ENCODE measurements at regions of chr18 and their contacts with region 1.

Region 1: DNA sequence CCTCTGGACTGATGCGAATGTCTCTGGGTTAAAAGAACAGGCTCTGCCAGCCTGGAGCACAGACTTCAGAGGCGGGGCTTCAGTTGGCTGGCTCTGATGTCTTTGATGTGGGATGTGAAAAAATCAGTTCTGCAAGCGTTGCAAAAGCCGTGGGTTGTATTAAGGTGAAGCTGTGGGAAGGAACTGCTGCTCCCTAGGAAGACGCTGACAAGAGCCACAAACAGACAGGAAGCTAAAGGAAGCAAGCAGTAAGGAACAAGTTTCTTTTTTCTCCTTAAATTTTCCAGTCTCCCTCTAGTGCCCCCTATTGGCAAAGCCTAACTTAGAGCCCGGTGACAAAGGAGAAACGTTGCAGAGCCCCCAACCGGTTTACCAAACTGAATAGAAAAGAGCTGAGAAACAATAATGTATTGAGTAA is 239.0 kb downstream of the CCDC178 start:
- DNase-seq: peak; percentile 70
- H3K4me3 ChIP-seq: no peak overlapping the region
- H3K27ac ChIP-seq: no peak overlapping the region
- H3K4me1 ChIP-seq: no peaks in the 10 kb centered on the region
- H3K27me3 ChIP-seq: no peaks in the 10 kb centered on the region
- CTCF ChIP-seq: peak; percentile 86

Region 2: DNA sequence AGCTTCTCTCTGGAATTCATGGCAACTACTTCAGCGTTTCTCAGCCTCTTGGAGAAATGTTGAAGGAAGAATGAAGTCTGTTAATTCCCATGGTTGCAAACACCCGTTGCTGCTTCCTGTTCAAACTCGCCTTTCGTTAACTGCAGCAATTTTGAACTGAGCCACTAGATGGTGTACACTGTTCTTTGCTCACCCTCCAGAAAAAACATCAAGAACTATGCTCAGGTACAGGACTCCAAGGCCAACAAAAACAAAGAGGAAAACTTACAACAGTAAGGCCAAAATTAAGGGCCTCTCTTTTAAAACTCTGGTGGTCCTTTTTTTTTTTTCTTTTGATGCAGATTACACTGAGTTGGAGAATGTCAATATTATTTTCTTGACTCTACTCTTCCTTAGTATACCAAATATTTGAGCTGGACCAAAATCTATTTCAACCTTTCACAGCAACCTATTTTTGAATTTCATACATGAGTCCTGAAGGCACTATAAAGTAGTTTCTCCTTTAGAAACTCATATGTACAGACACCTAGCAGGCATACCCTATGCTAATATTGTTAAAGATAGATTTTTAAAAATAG is 486.9 kb before region 1 on chr18:
- CTCF ChIA-PET with region 1: no interaction called
- POLR2A ChIA-PET with region 1: no interaction called
- intact Hi-C with region 1: loop called (anchors 2 kb)
- DNase-seq: peak; percentile 82
- H3K4me3 ChIP-seq: no peak overlapping the region
- H3K27ac ChIP-seq: no peak overlapping the region
- H3K4me1 ChIP-seq: no peaks in the 10 kb centered on the region
- H3K27me3 ChIP-seq: no peaks in the 10 kb centered on the region
- CTCF ChIP-seq: peak; percentile 86

Measured in A673 (cell line).